ENCODE measurements at regions of chr10 and their contacts with region 1.

Region 1: DNA sequence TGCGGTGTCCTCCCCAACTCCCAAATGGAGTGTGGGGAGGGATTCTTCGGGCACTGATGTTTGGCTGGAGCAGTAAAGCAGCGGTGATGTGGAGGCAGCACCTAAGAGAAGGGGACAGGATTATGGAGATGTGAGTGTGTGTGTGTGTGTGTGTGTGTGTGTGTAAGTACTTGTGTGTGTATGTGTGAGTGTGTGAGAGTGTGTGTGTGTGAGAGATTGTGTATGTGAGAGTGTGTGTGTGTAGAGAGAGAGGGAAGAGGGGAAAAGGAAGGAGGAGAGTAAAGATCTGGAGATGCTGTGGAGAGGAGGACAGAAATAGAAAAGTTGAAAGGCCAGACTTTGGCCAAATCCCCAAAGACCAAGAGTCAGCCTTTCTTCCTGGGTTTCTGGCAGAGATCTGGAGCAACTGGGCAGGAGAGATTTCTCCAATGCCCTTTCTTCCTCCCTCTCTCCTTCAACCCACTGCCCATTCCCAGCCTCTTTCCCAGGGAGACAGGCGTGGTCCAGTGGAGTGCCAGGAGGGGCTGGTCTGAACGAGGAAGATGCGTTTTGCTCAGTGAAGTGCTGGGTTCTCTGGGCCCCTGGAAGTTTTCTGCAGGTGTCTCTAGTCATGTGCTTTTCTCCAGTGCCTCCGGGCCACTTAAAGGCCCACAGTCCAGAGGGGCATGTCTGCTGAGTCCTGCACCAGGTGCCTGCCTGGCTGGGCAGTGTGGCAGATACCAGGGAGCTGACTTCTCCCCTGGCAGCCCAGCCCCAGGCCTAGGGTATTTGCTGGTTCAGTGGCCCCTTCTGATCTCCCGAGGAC is 60.5 kb downstream of the HK1 start:
- DNase-seq: no peak
- CTCF ChIP-seq: no peak

Region 2: DNA sequence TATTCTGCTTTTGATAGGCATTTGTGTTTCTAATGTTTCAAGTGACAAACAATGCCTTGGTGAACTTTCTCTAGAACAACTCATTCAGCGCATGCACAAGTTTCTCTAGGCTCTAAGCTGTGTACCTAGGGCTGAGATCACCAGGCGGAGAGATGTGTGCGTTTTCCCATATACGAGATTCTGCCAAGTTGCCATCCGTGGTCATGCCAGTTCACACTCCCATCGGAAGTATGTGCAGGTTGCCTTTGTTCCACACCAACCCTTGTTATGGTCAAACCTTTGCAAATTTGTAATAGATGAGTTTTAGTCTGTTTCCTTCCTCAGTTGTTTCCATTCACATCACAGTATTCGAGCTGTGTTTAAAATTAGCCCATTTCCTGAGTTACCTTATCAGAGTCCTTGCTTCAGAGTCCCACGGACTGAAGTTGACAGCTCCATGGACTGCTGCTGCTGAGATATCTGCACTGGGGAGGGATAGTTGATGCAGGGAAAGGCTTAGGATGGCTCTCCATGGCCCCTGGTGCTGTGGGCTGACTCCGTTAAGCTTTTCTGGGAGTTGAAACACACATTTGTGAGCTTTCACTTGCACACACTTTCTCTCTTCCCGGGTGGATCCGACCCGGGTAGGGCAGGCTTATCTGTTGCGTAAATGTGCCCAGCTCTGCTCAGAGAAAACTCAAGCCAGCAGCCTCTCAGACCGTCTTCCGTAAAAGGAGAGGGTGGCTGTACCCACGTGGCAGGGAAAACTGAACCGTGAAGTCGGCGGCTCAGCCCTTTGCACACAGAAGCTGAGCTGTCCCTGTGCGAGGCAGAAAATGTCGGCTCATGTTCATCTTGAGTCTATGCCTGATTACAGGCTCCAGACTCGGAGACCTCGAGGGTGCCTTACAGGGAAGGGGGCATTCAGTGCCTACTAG is 11.0 kb before region 1 on chr10:
- CTCF ChIA-PET with region 1: interaction called, 14 read pairs
- POLR2A ChIA-PET with region 1: interaction called, 4 read pairs
- DNase-seq: peak; percentile 61
- CTCF ChIP-seq: no peak